H1 (cell line): ENCODE measurements at regions of chr19 and their contacts with region 1.

Region 1: GRCh38 chr19:13718733-13719132 is 45.6 kb upstream of the MRI1 start:
- DNase-seq: peak in 1 of 2 experiments; percentile 29
- H3K4me3 ChIP-seq: no peak overlapping the region
- H3K27ac ChIP-seq: no peak overlapping the region
- H3K4me1 ChIP-seq: no peaks in the 10 kb centered on the region
- H3K27me3 ChIP-seq: no peaks in the 10 kb centered on the region
- CTCF ChIP-seq: peak; percentile 42 to 59 (median 57)
- EP300 ChIP-seq: no peak
- POLR2A ChIP-seq: no peak
- RAD21 ChIP-seq: peak; percentile 82 to 86

Region 2: DNA sequence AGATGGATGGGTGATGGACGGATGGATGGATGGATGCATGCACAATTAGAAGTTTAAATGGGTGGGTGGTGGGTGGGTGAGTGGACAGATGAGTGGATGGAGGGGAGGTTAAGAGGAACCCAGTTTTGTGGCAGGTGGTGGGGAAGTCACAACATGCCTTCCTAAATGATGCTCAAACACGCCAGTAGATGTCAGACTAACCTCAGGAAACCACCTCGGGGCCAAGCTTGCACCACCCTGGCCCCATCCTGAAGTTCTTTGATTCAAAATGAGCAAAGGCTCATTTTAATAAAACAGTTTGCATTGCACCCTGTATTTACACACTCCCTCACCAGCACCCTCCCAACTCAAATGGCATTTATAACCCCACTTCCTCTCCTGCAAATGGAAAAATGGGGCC is 121.1 kb before region 1 on chr19:
- CTCF ChIA-PET with region 1: interaction called, 20 read pairs
- POLR2A ChIA-PET with region 1: no interaction called
- DNase-seq: peak in 1 of 2 experiments; percentile 56
- H3K4me3 ChIP-seq: no peak overlapping the region
- H3K27ac ChIP-seq: no peak overlapping the region
- H3K4me1 ChIP-seq: no peaks in the 10 kb centered on the region; a peak in 1 of 7 replicates
- H3K27me3 ChIP-seq: no peaks in the 10 kb centered on the region
- CTCF ChIP-seq: peak; percentile 55 to 80 (median 74)
- EP300 ChIP-seq: no peak
- POLR2A ChIP-seq: no peak
- RAD21 ChIP-seq: peak; percentile 90 to 95

Region 3: DNA sequence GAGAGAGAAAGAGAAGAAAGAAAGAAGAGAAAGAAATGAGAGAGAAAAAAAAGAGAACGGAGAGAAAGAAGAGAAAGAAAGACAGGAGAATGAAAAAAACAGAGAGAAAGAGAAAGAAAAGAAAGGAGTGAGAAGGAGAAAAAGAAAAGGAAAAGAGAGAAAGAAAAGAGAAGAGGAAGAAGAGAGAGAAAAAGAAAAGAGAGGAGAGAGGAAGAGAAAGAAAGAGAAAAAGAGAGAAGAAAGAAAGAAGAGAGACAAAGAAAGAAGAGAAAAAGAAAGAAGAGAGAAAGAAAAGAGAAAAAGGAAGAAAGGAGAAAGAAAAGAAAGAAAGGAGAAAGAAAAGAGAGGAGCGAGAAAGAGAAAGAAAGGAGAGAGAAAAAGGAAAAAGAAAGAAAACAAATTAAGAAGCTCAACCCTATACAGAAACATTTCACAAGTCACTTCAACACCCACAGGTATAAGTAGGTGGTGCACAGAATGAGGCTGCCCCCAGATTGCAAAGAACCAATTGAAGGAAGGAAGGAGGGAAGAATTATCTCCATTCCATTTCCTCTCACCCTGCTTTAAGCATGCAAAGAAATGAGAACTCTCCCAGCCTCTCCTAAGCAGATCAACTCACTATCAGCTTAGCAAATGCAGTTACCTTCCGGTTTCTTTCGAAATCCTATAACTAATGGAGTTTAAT is 113.7 kb before region 1 on chr19:
- CTCF ChIA-PET with region 1: interaction called, 20 read pairs
- POLR2A ChIA-PET with region 1: no interaction called
- DNase-seq: no peak
- H3K4me3 ChIP-seq: no peak overlapping the region
- H3K27ac ChIP-seq: no peak overlapping the region
- H3K4me1 ChIP-seq: peaks cover 0 to 3% (median 3%) of the 10 kb centered on the region in 4 experiments; a peak in 5 of 7 replicates
- H3K27me3 ChIP-seq: no peaks in the 10 kb centered on the region
- CTCF ChIP-seq: no peak
- EP300 ChIP-seq: no peak
- POLR2A ChIP-seq: no peak
- RAD21 ChIP-seq: no peak

Region 4: GRCh38 chr19:13696839-13697238 is 21.9 kb before region 1 on chr19:
- CTCF ChIA-PET with region 1: interaction called, 11 read pairs
- POLR2A ChIA-PET with region 1: no interaction called
- DNase-seq: no peak
- H3K4me3 ChIP-seq: no peak overlapping the region
- H3K27ac ChIP-seq: no peak overlapping the region
- H3K4me1 ChIP-seq: no peaks in the 10 kb centered on the region
- H3K27me3 ChIP-seq: peaks cover 0 to 3% (median 1%) of the 10 kb centered on the region in 4 experiments; a peak in 2 of 7 replicates
- CTCF ChIP-seq: no peak
- EP300 ChIP-seq: no peak
- POLR2A ChIP-seq: no peak
- RAD21 ChIP-seq: no peak

Region 5: DNA sequence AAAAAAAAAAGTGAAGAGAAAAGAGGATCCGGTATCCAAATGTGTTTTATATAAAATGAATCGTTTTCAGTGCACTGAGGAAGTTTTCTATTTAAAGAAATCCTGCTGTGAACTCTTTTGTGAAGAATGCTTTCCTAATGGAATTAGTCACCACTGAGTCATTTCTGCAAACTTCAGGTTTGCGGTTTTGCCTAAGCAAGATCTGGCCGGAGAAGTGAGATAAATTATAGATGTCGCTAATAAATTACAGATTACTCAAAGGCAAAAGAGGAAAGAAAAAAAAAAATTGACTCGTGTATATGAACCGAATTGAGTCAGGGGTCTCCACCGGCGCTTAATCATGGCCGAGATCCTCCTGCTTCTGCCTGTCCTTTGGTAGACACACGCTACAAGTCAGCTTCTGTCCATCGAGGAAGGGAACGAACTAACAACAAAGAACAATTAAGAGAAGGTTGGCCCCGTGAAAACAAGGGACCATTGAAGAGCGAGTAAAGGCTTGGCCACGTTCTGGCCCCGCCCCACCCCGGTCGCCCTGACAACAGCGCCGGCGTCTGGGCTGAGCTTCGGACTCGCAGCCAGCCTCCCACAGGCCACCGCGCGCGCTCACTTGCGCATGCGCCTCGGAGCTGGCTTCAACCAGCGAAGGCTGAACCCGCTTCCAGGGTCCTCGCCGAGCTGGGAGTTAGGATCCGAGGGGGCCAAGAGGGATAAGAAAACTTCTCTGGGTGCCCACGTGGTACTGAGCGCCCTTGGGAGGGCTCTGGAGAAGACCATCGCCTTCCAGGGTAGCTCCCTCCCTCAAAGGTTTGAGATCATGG is 12.6 kb after region 1 on chr19:
- CTCF ChIA-PET with region 1: interaction called, 13 read pairs
- POLR2A ChIA-PET with region 1: interaction called, 5 read pairs
- DNase-seq: peak; percentile 87 to 98
- H3K4me3 ChIP-seq: peak overlapping the region; percentile 41 to 61 (median 54)
- H3K27ac ChIP-seq: peak overlapping the region; percentile 26; the same call in 1 of the 2 replicates
- H3K4me1 ChIP-seq: peaks cover 0 to 5% (median 0%) of the 10 kb centered on the region in 4 experiments; a peak in 2 of 7 replicates
- H3K27me3 ChIP-seq: no peaks in the 10 kb centered on the region
- CTCF ChIP-seq: no peak
- EP300 ChIP-seq: no peak
- POLR2A ChIP-seq: peak; percentile 84
- RAD21 ChIP-seq: no peak